ENCODE measurements at regions of chr12 and their contacts with region 1.

Region 1: GRCh38 chr12:17642340-17642650 is 447.7 kb downstream of the RERGL start:
- DNase-seq: no peak
- H3K4me3 ChIP-seq: no peak overlapping the region
- H3K27me3 ChIP-seq: no peaks in the 10 kb centered on the region
- CTCF ChIP-seq: no peak

Region 2: GRCh38 chr12:16385782-16386646 is 1256.3 kb before region 1 on chr12:
- CTCF ChIA-PET with region 1: interaction called, 19 read pairs
- POLR2A ChIA-PET with region 1: no interaction called
- DNase-seq: peak; percentile 5
- H3K4me3 ChIP-seq: no peak overlapping the region
- H3K27me3 ChIP-seq: no peaks in the 10 kb centered on the region
- CTCF ChIP-seq: peak; percentile 49

Region 3: DNA sequence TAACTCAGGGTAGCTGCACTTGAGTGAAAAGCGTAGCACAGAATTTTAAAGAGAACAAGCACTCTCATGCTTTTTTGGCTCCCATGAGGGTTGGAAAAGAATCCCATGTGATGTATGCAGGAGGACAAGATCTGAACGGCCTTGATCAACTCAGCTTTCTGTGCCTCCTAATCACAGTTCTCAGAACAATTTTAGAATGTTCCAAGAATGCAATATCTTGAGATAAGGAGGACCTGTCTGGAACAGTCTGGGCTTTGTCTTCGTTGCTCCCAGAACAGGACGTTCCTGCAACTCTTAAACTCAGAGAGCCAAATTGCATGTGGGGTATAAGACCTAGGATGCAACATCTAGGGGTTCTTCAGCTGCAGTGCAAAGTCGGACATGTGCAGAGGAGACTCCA is 135.0 kb before region 1 on chr12:
- CTCF ChIA-PET with region 1: no interaction called
- POLR2A ChIA-PET with region 1: no interaction called
- DNase-seq: no peak
- H3K4me3 ChIP-seq: no peak overlapping the region
- H3K27me3 ChIP-seq: no peaks in the 10 kb centered on the region
- CTCF ChIP-seq: no peak